ENCODE measurements at regions of chr18 and their contacts with region 1.

Region 1: DNA sequence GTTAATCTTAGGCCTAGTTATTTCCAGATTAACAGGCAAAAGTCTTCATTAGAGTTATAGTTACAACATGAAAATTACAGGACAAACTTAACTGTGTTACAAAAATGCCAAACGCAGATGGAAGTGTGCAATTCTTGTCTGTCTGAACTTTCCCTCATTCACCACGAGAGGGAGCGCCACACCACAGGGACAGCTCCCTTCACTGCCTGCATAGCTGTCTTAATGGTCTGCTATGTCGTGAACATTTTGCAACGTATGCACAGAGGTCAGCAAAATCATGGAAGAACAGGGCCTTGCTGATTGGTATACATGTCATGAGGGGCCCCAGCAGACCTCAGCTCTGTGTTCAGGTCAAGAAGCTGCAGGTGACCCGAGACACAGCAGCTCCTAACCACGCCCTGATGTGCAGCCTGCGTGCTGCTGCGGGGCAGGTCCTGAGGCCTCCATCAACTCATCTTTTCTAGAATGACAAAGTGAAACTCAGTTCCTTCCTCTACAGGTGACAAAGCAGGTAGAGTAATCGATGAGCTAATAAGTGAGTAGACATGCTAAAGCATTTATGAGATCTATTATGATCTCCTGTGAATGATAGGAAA is 78.8 kb upstream of the ATP8B1 start:
- DNase-seq: peak; percentile 73 to 77
- H3K4me3 ChIP-seq: no peak overlapping the region
- H3K4me1 ChIP-seq: peaks cover 5% of the 10 kb centered on the region
- H3K27me3 ChIP-seq: no peaks in the 10 kb centered on the region

Region 2: DNA sequence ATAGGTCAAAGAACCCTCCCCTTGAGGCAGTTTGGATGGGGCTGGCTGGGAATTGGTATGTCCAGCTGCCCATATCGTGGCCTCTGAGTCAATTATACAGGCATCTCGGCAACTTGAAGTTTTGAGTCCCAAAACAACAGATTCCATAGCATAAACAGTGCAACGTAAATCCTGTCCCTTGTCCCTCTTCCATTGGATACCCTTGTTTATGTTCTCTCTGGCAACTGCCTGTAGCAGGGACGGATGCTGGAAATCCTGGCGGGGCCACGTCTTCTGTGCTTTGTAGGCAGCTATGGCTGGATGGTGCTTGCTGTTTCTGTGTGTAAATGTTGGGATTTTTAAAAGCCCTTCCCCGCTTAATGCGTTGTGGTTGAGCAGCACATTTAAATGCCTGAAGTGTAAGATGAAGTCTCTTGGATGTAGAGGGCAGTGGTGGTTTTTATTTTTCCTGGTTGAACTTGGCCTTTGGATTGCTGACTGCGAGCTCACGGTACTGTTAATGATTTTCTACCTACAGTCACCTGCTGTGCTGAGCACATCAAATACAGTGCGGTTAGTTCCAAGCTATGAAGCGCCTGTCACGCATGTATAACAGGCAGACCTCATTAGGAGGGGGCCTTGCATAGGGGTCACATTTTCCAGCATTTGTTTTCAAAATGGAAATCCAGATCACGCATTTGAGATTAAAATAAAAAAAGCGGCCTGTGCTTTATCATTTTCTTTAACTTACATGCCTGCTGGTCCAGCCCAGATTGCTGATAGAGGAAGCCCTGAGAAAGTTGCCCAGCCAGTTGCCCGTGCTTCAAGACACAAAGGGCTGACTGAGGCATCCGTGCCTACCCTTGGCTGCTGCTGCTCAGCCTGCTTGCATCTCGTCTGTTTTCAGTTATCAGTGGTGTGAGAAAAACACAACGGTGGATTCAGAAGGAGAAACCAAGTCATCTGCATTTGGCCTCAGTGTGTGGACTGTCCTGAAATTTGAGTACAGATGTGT is 246.8 kb after region 1 on chr18:
- in situ Hi-C with region 1: loop called (anchors 10 kb)
- DNase-seq: no peak
- H3K4me3 ChIP-seq: no peak overlapping the region
- H3K4me1 ChIP-seq: no peaks in the 10 kb centered on the region
- H3K27me3 ChIP-seq: no peaks in the 10 kb centered on the region

Region 3: DNA sequence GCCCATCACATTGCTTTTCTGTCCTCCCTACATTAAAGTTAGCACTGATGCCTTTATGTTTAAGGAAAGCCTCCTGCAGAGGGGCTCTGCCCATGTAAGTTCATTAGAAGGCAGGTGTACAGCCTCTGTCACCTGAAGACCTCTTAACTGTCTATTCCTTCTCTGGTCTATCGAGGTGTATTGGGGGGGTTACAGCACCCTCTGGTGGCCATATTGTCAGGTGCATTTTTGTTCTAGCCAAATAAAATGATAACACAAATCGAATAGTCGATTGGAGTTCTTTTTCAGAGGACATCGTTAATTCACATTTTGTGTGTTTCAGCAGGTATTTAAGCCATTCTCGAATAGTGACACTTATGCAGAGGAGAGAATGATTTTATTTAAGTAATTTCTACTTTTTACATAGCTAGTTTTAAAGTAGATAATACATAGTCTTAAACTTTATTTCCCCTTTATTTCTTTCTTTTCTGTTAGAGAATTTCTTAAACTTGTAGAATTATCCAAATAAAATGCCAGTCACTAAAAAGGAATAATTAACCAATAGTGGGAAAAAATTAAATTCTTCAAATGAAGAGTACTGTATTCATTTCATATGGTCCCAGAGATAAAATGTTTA is 298.9 kb after region 1 on chr18:
- in situ Hi-C with region 1: loop called (anchors 25 kb)
- DNase-seq: peak; percentile 53 to 78
- H3K4me3 ChIP-seq: no peak overlapping the region
- H3K4me1 ChIP-seq: no peaks in the 10 kb centered on the region
- H3K27me3 ChIP-seq: no peaks in the 10 kb centered on the region